ENCODE measurements at regions of chr1 and their contacts with region 1.

Region 1: GRCh38 chr1:101357444-101357986 is 120.7 kb downstream of the S1PR1 start:
- DNase-seq: peak; percentile 55
- H3K4me3 ChIP-seq: no peak overlapping the region
- H3K27ac ChIP-seq: no peak overlapping the region
- H3K4me1 ChIP-seq: no peaks in the 10 kb centered on the region
- H3K27me3 ChIP-seq: no peaks in the 10 kb centered on the region
- CTCF ChIP-seq: peak; percentile 15 to 77 (median 61)
- POLR2A ChIP-seq: no peak

Region 2: GRCh38 chr1:101309334-101310311 is 47.9 kb before region 1 on chr1:
- intact Hi-C with region 1: loop called (anchors 5 kb)
- DNase-seq: peak; percentile 20
- H3K4me3 ChIP-seq: peak overlapping the region in 1 of 2 donors; percentile 5
- H3K27ac ChIP-seq: no peak overlapping the region
- H3K4me1 ChIP-seq: no peaks in the 10 kb centered on the region
- H3K27me3 ChIP-seq: no peaks in the 10 kb centered on the region
- CTCF ChIP-seq: peak; percentile 35 to 71 (median 68)
- POLR2A ChIP-seq: no peak

Region 3: DNA sequence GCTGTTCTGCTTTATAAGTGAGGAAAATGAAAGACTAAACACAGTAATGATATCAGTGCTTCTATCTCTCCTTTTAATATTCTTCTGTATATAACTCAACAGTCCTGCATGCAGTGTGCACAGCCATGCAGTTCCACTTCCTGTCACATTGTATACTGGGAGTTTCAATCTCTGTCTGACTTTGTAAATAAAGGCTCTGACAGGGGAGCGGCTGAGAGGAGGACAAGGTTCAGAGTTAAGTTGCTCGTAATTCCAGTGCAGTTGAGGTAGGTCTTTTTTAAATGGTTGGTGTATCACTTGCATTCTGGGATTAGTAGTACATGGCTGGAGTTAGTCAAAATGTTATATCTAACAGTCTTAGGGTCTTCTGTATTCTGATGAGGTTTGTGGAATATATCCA is 374.7 kb after region 1 on chr1:
- intact Hi-C with region 1: no loop called
- DNase-seq: no peak
- H3K4me3 ChIP-seq: no peak overlapping the region
- H3K27ac ChIP-seq: no peak overlapping the region
- H3K4me1 ChIP-seq: no peaks in the 10 kb centered on the region
- H3K27me3 ChIP-seq: no peaks in the 10 kb centered on the region
- CTCF ChIP-seq: no peak
- POLR2A ChIP-seq: no peak

Measured in prostate gland (tissue), 2 donors.